Activated CD4-positive, alpha-beta T cell treated with anti-CD3 and anti-CD28 coated beads for 36 hours (primary cell): ENCODE measurements at regions of chr5 and their contacts with region 1.

Region 1: DNA sequence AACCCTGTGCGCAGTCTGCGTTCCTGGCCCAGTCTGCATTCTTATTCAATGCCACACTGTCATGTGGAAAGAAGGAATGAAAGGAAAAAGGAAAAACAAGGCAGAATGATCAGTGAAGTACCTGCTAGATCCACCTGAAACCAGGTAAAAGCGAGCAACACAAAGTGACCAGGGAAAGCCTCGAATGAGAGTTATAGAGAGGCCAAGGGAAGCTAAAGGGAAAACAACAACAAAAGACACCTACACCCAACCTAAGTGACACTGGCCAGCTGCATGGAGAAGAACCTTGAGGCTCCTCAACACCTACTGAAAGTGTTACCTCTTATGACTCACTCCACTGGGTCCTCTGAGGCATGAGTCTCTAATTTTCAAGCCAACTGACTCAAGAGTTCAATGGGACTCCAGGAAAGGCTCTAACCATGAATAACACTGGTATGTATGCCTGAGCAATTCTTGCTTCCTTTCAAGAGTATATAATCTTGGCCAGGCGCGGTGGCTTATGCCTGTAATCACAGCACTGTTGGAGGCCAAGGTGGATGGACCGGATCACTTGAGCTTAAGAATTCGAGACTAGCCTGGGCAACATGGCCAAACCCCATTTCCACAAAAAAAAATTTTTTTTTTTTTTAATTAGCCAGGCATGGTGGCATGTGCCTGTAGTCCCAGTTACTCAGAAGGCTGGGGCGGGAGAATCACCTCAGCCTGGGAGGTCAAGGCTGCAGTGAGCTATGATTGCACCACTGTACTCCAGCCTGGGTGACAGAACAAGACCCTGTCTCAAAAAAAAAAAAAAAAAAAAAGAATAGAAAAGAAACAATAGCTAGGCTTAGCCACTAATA is 29.0 kb downstream of the MTMR12 start:
- DNase-seq: peak; percentile 48
- ATAC-seq: peak; percentile 77
- H3K4me3 Mint-ChIP-seq: no peak overlapping the region
- H3K27ac Mint-ChIP-seq: peak overlapping the region; percentile 8
- H3K4me1 Mint-ChIP-seq: peaks cover 53% of the 10 kb centered on the region
- H3K27me3 Mint-ChIP-seq: no peaks in the 10 kb centered on the region

Region 2: GRCh38 chr5:31839005-31839404 is 444.8 kb before region 1 on chr5:
- CTCF ChIA-PET with region 1: no interaction called
- POLR2A ChIA-PET with region 1: no interaction called
- intact Hi-C with region 1: no loop called
- DNase-seq: no peak
- ATAC-seq: no peak
- H3K4me3 Mint-ChIP-seq: no peak overlapping the region
- H3K27ac Mint-ChIP-seq: no peak overlapping the region
- H3K4me1 Mint-ChIP-seq: no peaks in the 10 kb centered on the region
- H3K27me3 Mint-ChIP-seq: no peaks in the 10 kb centered on the region

Region 3: GRCh38 chr5:32206509-32207354 is 77.0 kb before region 1 on chr5:
- CTCF ChIA-PET with region 1: no interaction called
- POLR2A ChIA-PET with region 1: no interaction called
- intact Hi-C with region 1: loop called in 1 of 2 experiments (anchors 1 kb)
- DNase-seq: no peak
- ATAC-seq: no peak
- H3K4me3 Mint-ChIP-seq: no peak overlapping the region
- H3K27ac Mint-ChIP-seq: peak overlapping the region; percentile 82
- H3K4me1 Mint-ChIP-seq: peaks cover 39% of the 10 kb centered on the region
- H3K27me3 Mint-ChIP-seq: peaks cover under 1% of the 10 kb centered on the region

Region 4: DNA sequence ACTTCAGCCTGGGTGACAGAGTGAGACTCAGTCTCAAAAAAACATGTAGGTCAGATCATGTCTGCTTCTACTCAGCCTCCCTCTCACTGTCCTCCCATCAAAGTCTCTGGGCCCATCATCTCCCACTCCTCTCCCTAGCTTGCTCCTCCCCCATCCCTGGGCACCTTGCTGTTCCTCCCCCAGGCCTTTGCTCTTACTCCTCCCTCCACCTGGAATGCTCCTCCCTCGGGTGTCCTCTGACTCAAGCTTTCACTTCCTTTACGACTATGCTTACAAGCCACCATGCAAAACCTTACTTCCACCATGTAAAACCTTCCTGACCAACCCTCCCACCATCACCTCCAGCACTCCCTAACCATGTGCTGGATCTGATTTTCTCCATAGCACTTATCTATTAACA is 22.6 kb before region 1 on chr5:
- CTCF ChIA-PET with region 1: no interaction called
- POLR2A ChIA-PET with region 1: no interaction called
- intact Hi-C with region 1: loop called in 1 of 2 experiments (anchors 1 kb)
- DNase-seq: peak; percentile 55
- ATAC-seq: peak; percentile 96
- H3K4me3 Mint-ChIP-seq: no peak overlapping the region
- H3K27ac Mint-ChIP-seq: peak overlapping the region; percentile 19
- H3K4me1 Mint-ChIP-seq: peaks cover 12% of the 10 kb centered on the region
- H3K27me3 Mint-ChIP-seq: no peaks in the 10 kb centered on the region

Region 5: GRCh38 chr5:32297181-32298058 is 13.7 kb after region 1 on chr5:
- CTCF ChIA-PET with region 1: interaction called, 4 read pairs
- POLR2A ChIA-PET with region 1: no interaction called
- intact Hi-C with region 1: loop called (anchors 1 kb)
- DNase-seq: no peak
- ATAC-seq: peak; percentile 90
- H3K4me3 Mint-ChIP-seq: no peak overlapping the region
- H3K27ac Mint-ChIP-seq: peak overlapping the region; percentile 56
- H3K4me1 Mint-ChIP-seq: peaks cover 41% of the 10 kb centered on the region
- H3K27me3 Mint-ChIP-seq: no peaks in the 10 kb centered on the region

Region 6: DNA sequence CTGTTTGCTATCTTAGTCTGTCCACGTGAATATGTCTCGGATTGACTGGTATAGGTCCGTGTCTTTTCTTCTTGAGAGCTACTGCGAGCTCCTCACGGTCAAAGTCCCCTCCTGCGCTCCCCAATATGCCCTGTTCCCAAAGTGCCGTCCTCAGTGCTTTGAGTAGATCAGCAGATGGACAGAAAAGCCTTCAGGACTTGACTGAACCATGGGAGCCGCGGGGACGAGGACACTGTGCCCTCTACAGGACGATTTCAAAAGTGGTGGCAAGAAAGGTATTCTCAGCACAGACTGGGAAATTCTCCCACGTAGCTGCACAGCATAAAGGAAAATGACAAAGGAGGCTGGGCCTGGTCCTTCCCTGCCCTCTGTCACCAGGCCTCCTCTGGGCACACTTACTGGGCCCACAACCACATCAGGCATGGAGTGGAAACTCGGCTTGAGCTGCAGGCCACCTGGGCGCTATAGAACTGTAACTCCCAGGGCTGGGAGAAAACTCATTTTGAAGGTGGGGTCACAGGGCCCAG is 45.6 kb after region 1 on chr5:
- CTCF ChIA-PET with region 1: interaction called, 10 read pairs
- POLR2A ChIA-PET with region 1: no interaction called
- intact Hi-C with region 1: no loop called
- DNase-seq: peak; percentile 75
- ATAC-seq: peak; percentile 97
- H3K4me3 Mint-ChIP-seq: no peak overlapping the region
- H3K27ac Mint-ChIP-seq: no peak overlapping the region
- H3K4me1 Mint-ChIP-seq: no peaks in the 10 kb centered on the region
- H3K27me3 Mint-ChIP-seq: no peaks in the 10 kb centered on the region